Natural killer cell (primary cell): ENCODE measurements at regions of chr12 and their contacts with region 1.

Region 1: DNA sequence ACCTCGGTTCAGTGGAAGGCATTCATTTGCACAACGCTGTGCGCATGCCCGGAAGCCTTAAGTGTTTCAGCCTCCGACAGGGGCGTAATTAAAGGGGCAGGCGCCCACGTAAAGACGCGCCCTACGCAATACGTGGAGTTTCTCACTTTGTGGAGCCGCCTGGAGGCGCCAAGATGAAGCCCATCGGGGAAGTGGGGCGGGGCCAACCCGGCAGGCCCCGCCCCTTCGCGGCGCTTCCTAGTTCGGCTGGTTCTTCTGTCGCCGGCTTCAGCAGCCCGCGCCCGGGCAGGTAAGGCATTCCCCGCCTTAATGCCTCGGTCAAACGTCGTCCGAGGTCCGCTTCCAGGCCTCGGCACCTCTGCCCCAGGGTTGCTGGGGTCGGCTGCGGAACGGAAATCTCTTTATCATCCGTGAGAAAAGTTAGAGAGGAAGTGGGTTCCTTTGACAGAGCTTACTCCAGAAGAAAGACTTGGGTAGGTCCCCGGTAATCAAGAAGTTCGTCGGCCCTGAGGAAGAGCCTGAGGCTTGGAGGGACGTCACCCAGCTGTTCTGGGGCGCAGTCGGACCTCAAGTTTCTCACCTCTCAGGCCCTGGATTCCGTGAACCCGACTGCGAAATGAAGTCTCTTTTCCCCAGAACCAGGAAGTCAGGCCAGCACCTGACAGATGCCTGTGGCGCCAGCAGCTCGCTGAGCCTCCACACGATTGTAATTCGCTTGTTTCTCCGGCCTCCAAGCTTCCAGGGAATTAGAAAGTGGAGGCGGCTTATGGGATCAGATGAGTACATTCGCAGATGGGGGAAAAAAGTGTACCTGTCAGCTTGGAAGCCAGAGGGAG is at the starts of genes IRAK4 and PUS7L:
- DNase-seq: peak; percentile 88 to 99
- ATAC-seq: peak; percentile 94 to 99 (median 95)
- H3K4me3 ChIP-seq: peak within 1 kb of the TSS; percentile 70
- H3K4me3 Mint-ChIP-seq: peak within 1 kb of the TSS; percentile 81
- H3K27ac ChIP-seq: peak within 1 kb of the TSS; percentile 91
- H3K27ac Mint-ChIP-seq: peak within 1 kb of the TSS; percentile 98
- H3K4me1 ChIP-seq: peaks cover 20% of the 10 kb centered on the region
- H3K4me1 Mint-ChIP-seq: peaks cover 59 to 71% of the 10 kb centered on the region in 2 donors
- H3K27me3 ChIP-seq: no peaks in the 10 kb centered on the region
- H3K27me3 Mint-ChIP-seq: no peaks in the 10 kb centered on the region
- CTCF ChIP-seq: peak; percentile 42
- total RNA-seq, gene IRAK4: 60.6 to 70.4 (median 70.3) TPM
- total RNA-seq, gene PUS7L: 15.8 to 24.5 (median 19.0) TPM

Region 2: DNA sequence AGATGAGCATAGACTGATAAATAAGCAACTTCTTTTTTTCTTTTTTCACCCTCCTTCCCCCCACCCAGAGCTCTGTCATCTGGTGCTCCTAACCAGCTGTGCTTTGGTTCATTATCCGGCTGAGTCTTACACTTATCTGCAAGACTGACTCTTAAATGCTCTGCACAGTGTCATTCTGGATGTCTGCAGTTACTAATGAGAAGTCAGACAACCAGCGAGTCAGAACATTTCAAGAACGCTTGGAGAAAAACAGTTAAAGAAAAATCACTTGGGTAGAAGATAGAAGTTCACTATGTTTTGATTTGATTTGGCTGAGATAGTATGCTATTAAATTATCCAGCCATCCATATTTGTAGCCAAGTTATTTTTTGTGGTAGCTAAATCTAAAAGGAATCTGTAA is 840.5 kb before region 1 on chr12:
- intact Hi-C with region 1: no loop called
- DNase-seq: no peak
- ATAC-seq: no peak
- H3K4me3 ChIP-seq: no peak overlapping the region
- H3K4me3 Mint-ChIP-seq: no peak overlapping the region
- H3K27ac ChIP-seq: no peak overlapping the region
- H3K27ac Mint-ChIP-seq: no peak overlapping the region
- H3K4me1 ChIP-seq: no peaks in the 10 kb centered on the region
- H3K4me1 Mint-ChIP-seq: no peaks in the 10 kb centered on the region
- H3K27me3 ChIP-seq: no peaks in the 10 kb centered on the region
- H3K27me3 Mint-ChIP-seq: no peaks in the 10 kb centered on the region
- CTCF ChIP-seq: no peak

Region 3: GRCh38 chr12:43805860-43806736 is 47.2 kb after region 1 on chr12 and contains the start of gene TWF1:
- intact Hi-C with region 1: loop called (anchors 1 kb)
- DNase-seq: peak; percentile 88 to 91
- ATAC-seq: peak; percentile 94 to 99 (median 96)
- H3K4me3 ChIP-seq: peak within 1 kb of the TSS; percentile 93
- H3K4me3 Mint-ChIP-seq: peak within 1 kb of the TSS; percentile 100
- H3K27ac ChIP-seq: peak within 1 kb of the TSS; percentile 97
- H3K27ac Mint-ChIP-seq: peak within 1 kb of the TSS; percentile 95 to 98
- H3K4me1 ChIP-seq: no peaks in the 10 kb centered on the region
- H3K4me1 Mint-ChIP-seq: peaks cover 28 to 29% of the 10 kb centered on the region in 2 donors
- H3K27me3 ChIP-seq: no peaks in the 10 kb centered on the region
- H3K27me3 Mint-ChIP-seq: peaks cover 1 to 10% of the 10 kb centered on the region in 2 donors
- CTCF ChIP-seq: no peak
- total RNA-seq, gene TWF1: 68.0 to 75.5 (median 68.1) TPM

Region 4: GRCh38 chr12:43835656-43836474 is 76.9 kb after region 1 on chr12 and contains the start of gene TMEM117:
- intact Hi-C with region 1: loop called (anchors 2 kb)
- DNase-seq: peak; percentile 62 to 73
- ATAC-seq: peak; percentile 77 to 85 (median 80)
- H3K4me3 ChIP-seq: peak within 1 kb of the TSS; percentile 62
- H3K4me3 Mint-ChIP-seq: peak within 1 kb of the TSS; percentile 81
- H3K27ac ChIP-seq: peak within 1 kb of the TSS; percentile 67
- H3K27ac Mint-ChIP-seq: peak within 1 kb of the TSS; percentile 74 to 85
- H3K4me1 ChIP-seq: peaks cover 13% of the 10 kb centered on the region
- H3K4me1 Mint-ChIP-seq: peaks cover 32 to 36% of the 10 kb centered on the region in 2 donors
- H3K27me3 ChIP-seq: peaks cover 2% of the 10 kb centered on the region
- H3K27me3 Mint-ChIP-seq: no peaks in the 10 kb centered on the region
- CTCF ChIP-seq: no peak
- total RNA-seq, gene TMEM117: 7.1 to 8.1 (median 7.9) TPM

Region 5: GRCh38 chr12:43882578-43883178 is 123.7 kb after region 1 on chr12:
- intact Hi-C with region 1: loop called (anchors 1 kb)
- DNase-seq: peak in 1 of 2 donors; percentile 77
- ATAC-seq: peak; percentile 77 to 86 (median 86)
- H3K4me3 ChIP-seq: no peak overlapping the region
- H3K4me3 Mint-ChIP-seq: no peak overlapping the region
- H3K27ac ChIP-seq: no peak overlapping the region
- H3K27ac Mint-ChIP-seq: no peak overlapping the region
- H3K4me1 ChIP-seq: no peaks in the 10 kb centered on the region
- H3K4me1 Mint-ChIP-seq: no peaks in the 10 kb centered on the region
- H3K27me3 ChIP-seq: no peaks in the 10 kb centered on the region
- H3K27me3 Mint-ChIP-seq: no peaks in the 10 kb centered on the region
- CTCF ChIP-seq: peak; percentile 75

Region 6: GRCh38 chr12:44038411-44038810 is 279.5 kb after region 1 on chr12:
- intact Hi-C with region 1: no loop called
- DNase-seq: no peak
- ATAC-seq: no peak
- H3K4me3 ChIP-seq: no peak overlapping the region
- H3K4me3 Mint-ChIP-seq: no peak overlapping the region
- H3K27ac ChIP-seq: no peak overlapping the region
- H3K27ac Mint-ChIP-seq: no peak overlapping the region
- H3K4me1 ChIP-seq: no peaks in the 10 kb centered on the region
- H3K4me1 Mint-ChIP-seq: no peaks in the 10 kb centered on the region
- H3K27me3 ChIP-seq: no peaks in the 10 kb centered on the region
- H3K27me3 Mint-ChIP-seq: no peaks in the 10 kb centered on the region
- CTCF ChIP-seq: no peak